ENCODE measurements at regions of chr2 and their contacts with region 1.

Region 1: GRCh38 chr2:54106631-54107454 is 8.6 kb upstream of the ACYP2 start:
- DNase-seq: peak; percentile 23
- H3K4me3 Mint-ChIP-seq: no peak overlapping the region
- H3K27ac Mint-ChIP-seq: no peak overlapping the region
- H3K4me1 Mint-ChIP-seq: peaks cover 6% of the 10 kb centered on the region
- H3K27me3 Mint-ChIP-seq: peaks cover 21% of the 10 kb centered on the region

Region 2: GRCh38 chr2:53886406-53887280 is 220.2 kb before region 1 on chr2:
- intact Hi-C with region 1: no loop called
- DNase-seq: no peak
- H3K4me3 Mint-ChIP-seq: no peak overlapping the region
- H3K27ac Mint-ChIP-seq: peak overlapping the region; percentile 47
- H3K4me1 Mint-ChIP-seq: peaks cover 43% of the 10 kb centered on the region
- H3K27me3 Mint-ChIP-seq: no peaks in the 10 kb centered on the region

Region 3: DNA sequence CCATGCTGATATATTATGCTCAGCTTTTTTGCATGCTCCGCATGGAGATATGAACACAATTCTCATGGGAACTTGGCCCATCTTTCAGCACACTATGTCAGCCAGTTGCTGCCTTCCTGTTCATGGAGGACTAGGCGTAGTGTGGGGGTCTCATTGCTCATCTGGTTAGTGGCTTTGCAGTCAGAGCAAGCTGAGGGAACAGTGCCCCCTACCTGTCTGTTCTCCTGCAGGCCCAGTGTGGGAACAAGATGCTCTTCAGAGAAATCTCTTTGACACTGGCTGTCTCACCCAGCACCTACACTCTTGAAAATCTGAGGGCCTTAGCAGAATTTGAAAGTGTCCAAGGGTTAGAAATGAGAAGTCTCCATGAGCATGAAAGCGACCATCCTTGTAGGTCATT is 396.3 kb after region 1 on chr2:
- intact Hi-C with region 1: loop called (anchors 5 kb)
- DNase-seq: no peak
- H3K4me3 Mint-ChIP-seq: no peak overlapping the region
- H3K27ac Mint-ChIP-seq: no peak overlapping the region
- H3K4me1 Mint-ChIP-seq: no peaks in the 10 kb centered on the region
- H3K27me3 Mint-ChIP-seq: peaks cover 20% of the 10 kb centered on the region

Region 4: DNA sequence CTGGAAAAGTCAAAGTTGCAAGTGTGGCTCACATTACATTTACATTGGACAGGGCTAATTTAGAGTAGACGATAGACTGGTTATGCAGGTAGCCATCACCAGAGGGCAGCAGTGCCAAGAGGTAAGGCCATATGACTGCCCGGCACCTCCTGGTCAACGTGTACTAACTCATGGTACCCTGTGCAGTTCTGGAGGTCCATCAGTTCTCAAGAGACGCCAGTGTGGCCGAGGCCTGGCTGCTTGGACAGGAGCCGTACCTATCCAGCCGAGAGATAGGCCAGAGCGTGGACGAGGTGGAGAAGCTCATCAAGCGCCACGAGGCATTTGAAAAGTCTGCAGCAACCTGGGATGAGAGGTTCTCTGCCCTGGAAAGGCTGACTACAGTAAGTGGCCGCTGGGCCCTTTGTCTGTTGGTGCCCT is 550.8 kb after region 1 on chr2:
- intact Hi-C with region 1: no loop called
- DNase-seq: no peak
- H3K4me3 Mint-ChIP-seq: no peak overlapping the region
- H3K27ac Mint-ChIP-seq: peak overlapping the region; percentile 8
- H3K4me1 Mint-ChIP-seq: peaks cover 21% of the 10 kb centered on the region
- H3K27me3 Mint-ChIP-seq: no peaks in the 10 kb centered on the region

Measured in activated T-helper 2 cell treated with anti-CD3 and anti-CD28 coated beads, Interferon-gamma antibody, Interleukin-2, Interleukin-4, amounts not matched to agents 10 μg/mL and 5 μg/mL and 100 μg/mL, durations not matched to agents 14 hours and 24 hours and 36 hours (primary cell).